Sigmoid colon (tissue), 7 donors: ENCODE measurements at regions of chr19 and their contacts with region 1.

Region 1: DNA sequence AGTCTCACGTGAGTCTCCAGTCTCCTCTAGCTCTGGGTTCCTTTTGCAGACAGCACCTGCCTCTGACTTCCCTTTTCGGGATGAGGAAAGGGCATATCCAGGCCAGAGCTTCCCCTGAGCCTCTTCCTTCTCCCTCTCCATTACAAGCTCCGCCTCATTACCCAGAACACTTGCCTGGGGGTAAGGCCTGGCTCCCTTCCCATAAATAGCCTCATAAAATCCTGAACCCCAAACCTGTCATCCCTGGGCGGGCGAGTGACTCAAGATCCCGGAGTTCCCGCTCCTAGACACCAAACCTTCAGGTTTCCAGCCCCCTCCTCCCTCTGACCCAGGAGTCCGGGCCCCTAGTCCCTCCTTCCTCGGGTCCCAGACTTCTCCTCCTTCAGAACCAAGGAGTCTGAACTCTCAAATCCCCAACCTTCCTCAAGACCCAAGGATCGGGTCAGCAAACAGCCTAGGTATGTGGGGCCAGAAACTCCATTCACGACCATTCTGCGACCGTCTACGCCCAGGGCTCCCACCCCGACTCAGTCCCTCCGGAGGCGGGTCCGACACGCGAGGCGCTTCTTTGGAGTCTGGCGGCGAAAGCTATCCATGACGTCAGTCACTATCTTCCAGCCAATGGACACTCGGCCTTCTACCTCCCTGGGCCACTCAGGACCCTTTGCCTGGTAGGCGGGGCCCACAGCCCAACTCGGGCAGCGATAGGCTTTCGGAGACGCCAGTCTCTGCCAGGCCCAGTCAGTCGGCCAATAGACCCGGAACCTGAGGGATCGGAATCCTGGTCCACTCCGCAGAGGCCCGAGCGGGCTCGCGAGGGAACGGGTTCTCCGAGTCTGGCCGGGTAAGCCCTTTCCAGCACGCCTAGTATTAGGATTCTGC is 6.5 kb upstream of the CNFN start:
- DNase-seq: peak; percentile 99
- H3K4me3 ChIP-seq: peak overlapping the region; percentile 25 to 56 (median 50)
- H3K27ac ChIP-seq: peak overlapping the region; percentile 78 to 90 (median 88)
- H3K4me1 ChIP-seq: peaks cover 0 to 27% (median 21%) of the 10 kb centered on the region in 4 donors
- H3K27me3 ChIP-seq: no peaks in the 10 kb centered on the region
- CTCF ChIP-seq: no peak
- EP300 ChIP-seq: no peak
- POLR2A ChIP-seq: peak; percentile 62 to 68

Region 2: DNA sequence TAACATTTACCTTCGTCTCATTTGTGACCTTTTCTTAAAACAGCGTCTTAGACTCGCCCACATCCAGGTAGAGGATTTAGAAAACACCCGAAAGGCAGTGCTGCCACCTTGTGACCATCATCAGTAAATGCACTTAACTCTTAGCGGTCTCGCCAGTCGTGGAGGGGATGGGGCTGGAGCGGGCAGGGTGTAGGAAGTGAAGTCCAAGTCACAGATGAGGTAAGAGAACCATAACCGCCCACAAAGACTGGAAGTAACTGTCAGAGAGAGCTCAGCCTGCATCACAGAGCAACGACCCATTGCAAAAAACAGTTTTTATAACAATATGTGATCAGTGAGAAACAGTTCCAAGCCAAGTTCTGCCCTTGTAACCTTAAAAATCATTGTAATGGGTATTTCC is 611.0 kb before region 1 on chr19:
- intact Hi-C with region 1: no loop called
- DNase-seq: no peak
- H3K4me3 ChIP-seq: no peak overlapping the region
- H3K27ac ChIP-seq: no peak overlapping the region
- H3K4me1 ChIP-seq: peaks cover 0 to 10% (median 4%) of the 10 kb centered on the region in 4 donors
- H3K27me3 ChIP-seq: peaks cover 5 to 72% (median 13%) of the 10 kb centered on the region in 3 donors
- CTCF ChIP-seq: peak; percentile 51 to 73 (median 64)
- EP300 ChIP-seq: no peak
- POLR2A ChIP-seq: no peak

Region 3: DNA sequence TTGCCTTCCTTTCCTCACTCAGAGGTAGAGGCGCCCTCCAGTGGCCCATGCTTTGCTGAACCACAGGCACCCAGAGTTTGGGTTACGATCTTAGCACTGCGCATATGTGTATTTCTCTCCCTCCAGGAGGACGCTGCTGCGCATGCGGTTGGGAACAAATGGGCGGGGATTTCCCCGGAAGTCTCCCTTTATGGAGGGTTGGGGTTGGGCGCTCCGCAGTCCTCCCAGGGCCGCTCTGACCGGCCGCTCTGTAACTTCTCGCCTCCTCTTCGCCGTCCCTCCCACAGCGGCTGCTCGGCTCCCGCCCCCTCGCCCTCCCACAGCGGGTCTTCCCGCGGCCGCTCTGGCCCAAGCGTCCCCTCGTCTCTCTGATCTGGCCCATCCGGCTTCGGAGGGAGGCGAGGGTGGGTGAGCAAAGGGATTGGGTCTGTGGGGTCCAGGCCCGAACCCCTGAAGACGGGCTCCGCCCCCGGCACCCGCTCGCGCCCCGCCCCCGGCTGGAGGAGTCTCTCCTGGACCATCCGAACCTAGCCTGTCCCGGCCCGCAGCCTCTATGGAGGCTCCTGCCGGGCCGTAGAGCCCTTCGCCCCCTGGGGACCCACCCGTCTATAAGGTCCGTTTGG is 71.2 kb before region 1 on chr19 and contains the start of gene MEGF8:
- intact Hi-C with region 1: loop called (anchors 5 kb)
- DNase-seq: peak; percentile 99
- H3K4me3 ChIP-seq: peak within 1 kb of the TSS; percentile 66 to 94 (median 80)
- H3K27ac ChIP-seq: peak within 1 kb of the TSS; percentile 73 to 80 (median 76)
- H3K4me1 ChIP-seq: peaks cover 0 to 40% (median 37%) of the 10 kb centered on the region in 4 donors
- H3K27me3 ChIP-seq: peaks cover 17 to 29% (median 18%) of the 10 kb centered on the region in 3 donors
- CTCF ChIP-seq: peak in 3 of 4 experiments; percentile 76 to 86 (median 81)
- EP300 ChIP-seq: no peak
- POLR2A ChIP-seq: peak; percentile 52 to 55
- total RNA-seq, gene MEGF8: 5.4 to 21.6 (median 9.3) TPM

Region 4: GRCh38 chr19:42465827-42466280 is 69.2 kb after region 1 on chr19:
- intact Hi-C with region 1: no loop called
- DNase-seq: no peak
- H3K4me3 ChIP-seq: no peak overlapping the region
- H3K27ac ChIP-seq: no peak overlapping the region
- H3K4me1 ChIP-seq: no peaks in the 10 kb centered on the region
- H3K27me3 ChIP-seq: no peaks in the 10 kb centered on the region
- CTCF ChIP-seq: no peak
- EP300 ChIP-seq: no peak
- POLR2A ChIP-seq: no peak